ENCODE measurements at regions of chr12 and their contacts with region 1.

Region 1: GRCh38 chr12:48995061-48995879 is 3.9 kb downstream of the DDN start:
- DNase-seq: peak; percentile 72
- H3K4me3 Mint-ChIP-seq: no peak overlapping the region
- H3K27ac Mint-ChIP-seq: no peak overlapping the region
- H3K4me1 Mint-ChIP-seq: peaks cover 32% of the 10 kb centered on the region
- H3K27me3 Mint-ChIP-seq: peaks cover 37% of the 10 kb centered on the region

Region 2: DNA sequence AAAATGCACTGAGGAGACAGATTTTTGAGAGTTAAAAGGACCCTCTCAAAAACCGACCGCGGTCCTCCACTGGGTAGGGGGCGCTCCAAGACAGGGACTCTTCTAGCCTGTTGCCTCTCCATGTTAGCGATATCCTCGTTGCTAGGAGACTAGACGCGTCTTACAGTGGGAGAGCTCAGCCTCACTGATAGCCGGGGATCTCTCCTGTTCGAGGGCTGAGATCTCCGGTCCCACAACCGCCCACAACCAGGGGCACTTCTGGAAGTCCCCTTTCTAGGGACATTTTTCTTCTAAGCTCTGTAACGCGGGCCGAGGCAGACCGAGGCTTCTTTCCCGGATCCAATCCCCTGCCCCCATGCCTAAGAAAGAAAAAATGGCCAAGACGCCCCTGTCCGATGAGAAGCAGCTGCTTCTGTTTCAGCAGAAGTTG is 91.3 kb before region 1 on chr12:
- CTCF ChIA-PET with region 1: interaction called, 13 read pairs
- POLR2A ChIA-PET with region 1: no interaction called
- intact Hi-C with region 1: loop called (anchors 5 kb)
- DNase-seq: peak; percentile 89
- H3K4me3 Mint-ChIP-seq: peak overlapping the region; percentile 70
- H3K27ac Mint-ChIP-seq: no peak overlapping the region
- H3K4me1 Mint-ChIP-seq: peaks cover 2% of the 10 kb centered on the region
- H3K27me3 Mint-ChIP-seq: no peaks in the 10 kb centered on the region

Region 3: GRCh38 chr12:48936379-48936979 is 58.8 kb before region 1 on chr12:
- CTCF ChIA-PET with region 1: interaction called, 15 read pairs
- POLR2A ChIA-PET with region 1: no interaction called
- intact Hi-C with region 1: no loop called
- DNase-seq: peak; percentile 85
- H3K4me3 Mint-ChIP-seq: no peak overlapping the region
- H3K27ac Mint-ChIP-seq: no peak overlapping the region
- H3K4me1 Mint-ChIP-seq: peaks cover 22% of the 10 kb centered on the region
- H3K27me3 Mint-ChIP-seq: no peaks in the 10 kb centered on the region

Region 4: GRCh38 chr12:48977315-48978281 is 17.7 kb before region 1 on chr12:
- CTCF ChIA-PET with region 1: interaction called, 168 read pairs
- POLR2A ChIA-PET with region 1: interaction called, 5 read pairs
- intact Hi-C with region 1: loop called (anchors 1 kb)
- DNase-seq: peak; percentile 87
- H3K4me3 Mint-ChIP-seq: peak overlapping the region; percentile 59
- H3K27ac Mint-ChIP-seq: peak overlapping the region; percentile 70
- H3K4me1 Mint-ChIP-seq: peaks cover 55% of the 10 kb centered on the region
- H3K27me3 Mint-ChIP-seq: peaks cover 63% of the 10 kb centered on the region

Region 5: GRCh38 chr12:49043856-49044258 is 48.6 kb after region 1 on chr12:
- CTCF ChIA-PET with region 1: interaction called, 43 read pairs
- POLR2A ChIA-PET with region 1: no interaction called
- intact Hi-C with region 1: no loop called
- DNase-seq: peak; percentile 84
- H3K4me3 Mint-ChIP-seq: no peak overlapping the region
- H3K27ac Mint-ChIP-seq: peak overlapping the region; percentile 51
- H3K4me1 Mint-ChIP-seq: peaks cover 2% of the 10 kb centered on the region
- H3K27me3 Mint-ChIP-seq: no peaks in the 10 kb centered on the region

Region 6: GRCh38 chr12:49146406-49146805 is 151.1 kb after region 1 on chr12:
- CTCF ChIA-PET with region 1: no interaction called
- POLR2A ChIA-PET with region 1: no interaction called
- intact Hi-C with region 1: no loop called
- DNase-seq: no peak
- H3K4me3 Mint-ChIP-seq: no peak overlapping the region
- H3K27ac Mint-ChIP-seq: no peak overlapping the region
- H3K4me1 Mint-ChIP-seq: no peaks in the 10 kb centered on the region
- H3K27me3 Mint-ChIP-seq: no peaks in the 10 kb centered on the region

Measured in activated CD4-positive, alpha-beta memory T cell treated with anti-CD3 and anti-CD28 coated beads for 36 hours (primary cell).